ENCODE measurements at regions of chr1 and their contacts with region 1.

Region 1: DNA sequence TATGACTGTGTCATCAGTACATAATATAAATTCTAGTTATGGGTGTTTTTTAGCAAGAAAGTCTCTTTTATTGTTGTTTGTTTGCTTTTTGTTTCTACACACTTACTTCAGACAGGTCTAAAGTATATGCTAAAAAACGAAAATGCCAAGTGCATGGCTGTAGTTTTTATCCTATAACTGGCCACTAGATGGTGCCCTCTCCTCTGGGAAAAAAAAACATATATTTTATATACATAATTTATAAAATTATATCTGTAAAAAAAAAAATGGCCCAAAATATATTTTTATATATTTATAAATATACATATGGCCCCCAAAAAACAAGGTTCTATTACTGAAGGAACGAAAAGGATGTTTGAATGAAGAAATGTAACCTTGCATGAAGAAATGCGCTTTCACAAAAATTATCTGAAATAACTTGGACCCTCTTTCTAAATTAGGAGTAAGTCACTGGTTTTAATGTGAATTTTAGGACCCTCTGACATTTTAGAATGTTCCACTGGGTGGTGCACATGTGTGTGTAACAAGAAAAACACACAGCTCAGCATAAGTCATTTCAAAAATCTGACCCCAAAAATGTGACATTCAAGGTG is 93.5 kb downstream of the TTLL7 start:
- DNase-seq: no peak
- H3K4me3 ChIP-seq: no peak overlapping the region
- H3K27ac ChIP-seq: no peak overlapping the region
- H3K27me3 ChIP-seq: no peaks in the 10 kb centered on the region
- CTCF ChIP-seq: peak; percentile 75

Region 2: GRCh38 chr1:83531521-83532309 is 373.7 kb before region 1 on chr1:
- CTCF ChIA-PET with region 1: no interaction called
- POLR2A ChIA-PET with region 1: no interaction called
- DNase-seq: no peak
- H3K4me3 ChIP-seq: no peak overlapping the region
- H3K27ac ChIP-seq: no peak overlapping the region
- H3K27me3 ChIP-seq: no peaks in the 10 kb centered on the region
- CTCF ChIP-seq: no peak

Region 3: GRCh38 chr1:83889707-83890106 is 15.7 kb before region 1 on chr1:
- CTCF ChIA-PET with region 1: interaction called, 13 read pairs
- POLR2A ChIA-PET with region 1: no interaction called
- DNase-seq: no peak
- H3K4me3 ChIP-seq: no peak overlapping the region
- H3K27ac ChIP-seq: no peak overlapping the region
- H3K27me3 ChIP-seq: no peaks in the 10 kb centered on the region
- CTCF ChIP-seq: no peak

Region 4: DNA sequence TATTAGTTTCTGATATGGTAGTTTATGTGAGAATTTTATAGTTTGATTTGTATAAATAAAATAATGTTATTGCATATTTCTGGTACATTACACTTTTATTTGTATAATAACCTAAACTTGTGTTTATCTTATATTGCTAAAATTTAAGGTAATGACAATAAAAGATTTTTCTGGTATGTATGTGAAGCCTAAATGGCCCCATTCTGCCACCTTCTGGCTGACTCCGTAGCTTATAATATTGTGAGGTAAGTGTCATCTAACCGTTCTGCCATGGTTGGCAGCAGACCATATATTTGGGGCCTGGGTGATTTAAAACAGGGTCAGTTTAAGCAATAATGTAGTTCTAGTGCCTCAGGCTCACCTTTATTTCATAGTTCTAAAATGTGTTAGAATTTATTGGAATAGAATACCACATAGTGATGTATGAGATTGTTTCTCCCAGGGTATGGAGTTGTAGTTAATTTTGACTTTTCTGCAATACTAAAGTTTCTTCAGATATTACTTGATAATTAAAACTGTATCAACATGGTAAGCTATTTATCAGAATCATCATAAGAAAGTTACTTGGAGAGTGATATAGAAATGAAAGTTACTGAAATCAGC is 217.5 kb after region 1 on chr1:
- CTCF ChIA-PET with region 1: interaction called, 25 read pairs
- POLR2A ChIA-PET with region 1: no interaction called
- DNase-seq: no peak
- H3K4me3 ChIP-seq: no peak overlapping the region
- H3K27ac ChIP-seq: no peak overlapping the region
- H3K27me3 ChIP-seq: no peaks in the 10 kb centered on the region
- CTCF ChIP-seq: peak; percentile 75

Region 5: GRCh38 chr1:84271441-84272151 is 366.2 kb after region 1 on chr1:
- CTCF ChIA-PET with region 1: no interaction called
- POLR2A ChIA-PET with region 1: no interaction called
- DNase-seq: no peak
- H3K4me3 ChIP-seq: no peak overlapping the region
- H3K27ac ChIP-seq: no peak overlapping the region
- H3K27me3 ChIP-seq: no peaks in the 10 kb centered on the region
- CTCF ChIP-seq: no peak

Measured in AG04450 (cell line).